PC-9 (cell line): ENCODE measurements at regions of chr6 and their contacts with region 1.

Region 1: DNA sequence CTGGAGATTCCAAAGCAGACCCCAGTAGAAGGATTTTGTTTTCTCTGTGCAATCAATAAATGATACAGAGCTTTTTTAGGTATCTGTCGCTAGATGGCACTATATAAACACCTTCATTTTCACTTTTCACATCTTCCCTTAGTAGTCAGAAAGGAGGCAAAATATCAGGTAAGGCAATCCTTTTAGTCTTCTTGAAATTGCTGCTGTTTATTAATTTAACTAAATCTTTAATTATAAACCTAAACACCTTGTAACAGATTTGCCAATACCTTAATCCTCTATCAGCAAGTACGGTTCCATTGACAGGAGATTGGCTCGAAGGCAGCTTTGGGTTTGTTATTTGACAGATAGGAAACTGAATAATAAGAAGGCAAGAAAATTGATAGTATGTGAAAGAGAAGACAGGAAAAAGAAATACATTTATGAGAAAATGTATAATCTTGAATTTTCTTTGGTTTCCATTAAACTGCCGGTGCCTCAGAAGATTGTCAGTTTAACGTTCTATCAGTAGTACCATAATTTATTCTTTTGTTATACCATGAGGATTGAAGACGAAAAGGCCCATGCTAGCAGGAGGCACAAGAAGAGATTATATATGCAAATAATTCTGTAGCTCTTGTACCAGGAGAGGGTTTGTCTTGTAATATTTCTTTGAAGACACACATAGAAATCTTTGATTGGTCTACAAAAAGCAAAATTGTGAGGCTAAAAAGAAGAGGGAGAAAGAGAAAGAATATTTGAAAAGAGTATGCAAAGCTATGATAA is 23.5 kb upstream of the IBTK start:
- DNase-seq: peak in 1 of 2 experiments; percentile 35
- H3K4me3 ChIP-seq: no peak overlapping the region
- H3K27ac ChIP-seq: no peak overlapping the region
- H3K4me1 ChIP-seq: no peaks in the 10 kb centered on the region
- H3K27me3 ChIP-seq: no peaks in the 10 kb centered on the region
- CTCF ChIP-seq: peak; percentile 74

Region 2: DNA sequence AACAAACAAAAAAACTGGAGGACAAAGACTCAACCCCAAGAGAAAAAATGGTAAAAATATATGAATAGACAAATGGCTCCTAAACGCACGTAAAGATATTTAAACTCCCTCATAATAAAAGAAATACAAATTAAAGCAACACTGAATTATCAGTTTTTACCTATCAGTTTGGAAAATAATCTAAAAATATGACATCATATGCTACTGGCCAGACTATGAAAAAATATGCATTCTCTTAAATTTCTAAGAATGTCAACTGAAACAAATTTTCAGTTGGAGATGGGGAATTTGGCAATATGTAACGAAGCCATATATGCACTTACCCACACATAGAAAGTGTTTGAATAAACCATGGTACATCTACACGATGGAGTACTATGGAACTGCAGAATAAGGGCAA is 270.2 kb after region 1 on chr6:
- CTCF ChIA-PET with region 1: no interaction called
- POLR2A ChIA-PET with region 1: no interaction called
- intact Hi-C with region 1: loop called (anchors 2 kb)
- DNase-seq: no peak
- H3K4me3 ChIP-seq: no peak overlapping the region
- H3K27ac ChIP-seq: no peak overlapping the region
- H3K4me1 ChIP-seq: no peaks in the 10 kb centered on the region
- H3K27me3 ChIP-seq: no peaks in the 10 kb centered on the region
- CTCF ChIP-seq: no peak

Region 3: GRCh38 chr6:82589509-82590206 is 318.6 kb after region 1 on chr6:
- CTCF ChIA-PET with region 1: no interaction called
- POLR2A ChIA-PET with region 1: no interaction called
- intact Hi-C with region 1: loop called (anchors 2 kb)
- DNase-seq: peak; percentile 6 to 62
- H3K4me3 ChIP-seq: no peak overlapping the region
- H3K27ac ChIP-seq: no peak overlapping the region
- H3K4me1 ChIP-seq: peaks cover 18% of the 10 kb centered on the region; the same call in 1 of the 2 replicates
- H3K27me3 ChIP-seq: no peaks in the 10 kb centered on the region
- CTCF ChIP-seq: peak; percentile 42; the same call in 1 of the 2 replicates